ENCODE measurements at regions of chr16 and their contacts with region 1.

Region 1: DNA sequence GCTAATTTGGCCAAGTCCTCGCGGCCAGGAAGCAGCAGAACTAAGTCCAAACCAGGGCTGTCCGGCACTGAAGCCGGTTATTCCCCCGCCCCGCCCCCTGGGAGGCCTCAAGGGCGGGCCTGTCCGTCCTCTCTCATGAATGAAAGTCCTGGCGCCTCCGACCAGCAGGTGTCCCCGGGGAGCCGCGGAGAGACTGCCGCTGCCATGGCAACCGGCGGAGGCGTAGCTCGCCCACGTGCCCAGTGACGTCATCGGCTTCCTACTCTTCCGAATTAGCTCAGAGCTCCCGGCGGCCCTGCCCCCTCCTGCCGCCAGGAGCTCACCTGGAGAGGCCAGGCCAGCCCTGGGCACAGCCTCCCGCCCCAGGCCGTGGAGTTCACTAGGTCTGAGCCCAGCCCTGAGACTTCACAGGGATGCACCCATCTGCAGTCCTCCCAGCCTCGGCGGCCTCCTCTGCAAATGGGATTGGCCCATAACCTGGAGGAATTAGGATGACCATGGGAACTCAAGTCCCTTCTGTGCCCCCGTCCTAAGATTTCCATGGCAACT is 1.3 kb downstream of the SPATA2L start:
- H3K4me3 ChIP-seq: peak overlapping the region; percentile 68
- H3K27ac ChIP-seq: peak overlapping the region; percentile 65
- H3K4me1 ChIP-seq: peaks cover 8% of the 10 kb centered on the region
- CTCF ChIP-seq: peak; percentile 90

Region 2: GRCh38 chr16:89256651-89257254 is 443.4 kb before region 1 on chr16:
- CTCF ChIA-PET with region 1: no interaction called
- POLR2A ChIA-PET with region 1: no interaction called
- H3K4me3 ChIP-seq: no peak overlapping the region
- H3K27ac ChIP-seq: no peak overlapping the region
- H3K4me1 ChIP-seq: no peaks in the 10 kb centered on the region; the same call in 1 of the 2 replicates
- CTCF ChIP-seq: no peak

Region 3: GRCh38 chr16:89686520-89687091 is 13.6 kb before region 1 on chr16 and contains the start of gene CDK10:
- CTCF ChIA-PET with region 1: interaction called, 4 read pairs
- POLR2A ChIA-PET with region 1: interaction called, 10 read pairs
- H3K4me3 ChIP-seq: peak within 1 kb of the TSS; percentile 74
- H3K27ac ChIP-seq: peak within 1 kb of the TSS; percentile 79
- H3K4me1 ChIP-seq: no peaks in the 10 kb centered on the region
- CTCF ChIP-seq: no peak

Region 4: GRCh38 chr16:89720813-89721545 is 20.8 kb after region 1 on chr16 and contains the starts of genes VPS9D1 and ZNF276:
- CTCF ChIA-PET with region 1: interaction called, 18 read pairs
- POLR2A ChIA-PET with region 1: interaction called, 12 read pairs
- H3K4me3 ChIP-seq: peak within 1 kb of the TSS; percentile 70
- H3K27ac ChIP-seq: peak within 1 kb of the TSS; percentile 84
- H3K4me1 ChIP-seq: peaks cover 5% of the 10 kb centered on the region; the same call in 1 of the 2 replicates
- CTCF ChIP-seq: no peak

Region 5: DNA sequence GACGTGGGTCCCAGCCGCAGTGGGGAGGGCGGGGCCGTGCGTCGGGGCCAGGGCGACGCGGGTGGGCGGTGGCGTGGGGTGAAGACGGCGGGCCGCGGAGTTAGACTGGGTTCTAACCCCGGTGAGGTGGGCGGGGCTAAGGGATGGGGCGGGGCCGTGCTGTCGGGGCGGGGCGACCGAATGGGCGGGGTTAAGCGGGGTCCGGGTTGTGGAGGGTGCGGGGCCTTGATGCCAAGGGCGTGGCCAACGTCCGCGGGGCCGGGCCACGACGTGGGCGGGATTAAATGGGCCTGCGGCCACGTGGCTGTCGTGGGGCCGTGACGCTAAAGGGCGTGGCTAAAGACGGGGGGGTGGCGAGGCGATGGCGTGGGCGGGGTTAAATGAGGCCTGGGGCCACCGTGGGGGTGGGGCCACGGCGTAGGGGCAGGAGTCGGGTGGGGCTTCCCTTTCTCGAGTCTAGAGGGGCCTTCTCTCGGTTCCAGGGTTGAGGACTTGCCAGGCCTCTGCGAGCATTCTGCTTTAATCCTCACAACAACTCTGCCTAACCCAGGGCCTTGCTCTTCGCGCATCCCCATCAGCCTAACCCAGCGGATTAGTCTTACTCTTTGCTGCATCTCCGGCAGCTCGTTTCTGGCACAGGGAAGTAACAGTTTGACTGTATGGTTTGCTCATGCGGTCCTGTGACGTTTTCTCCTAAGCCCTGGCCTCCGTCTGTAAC is 174.0 kb after region 1 on chr16:
- CTCF ChIA-PET with region 1: no interaction called
- POLR2A ChIA-PET with region 1: interaction called, 12 read pairs
- H3K4me3 ChIP-seq: peak overlapping the region; percentile 83
- H3K27ac ChIP-seq: peak overlapping the region; percentile 98
- H3K4me1 ChIP-seq: no peaks in the 10 kb centered on the region
- CTCF ChIP-seq: no peak